ENCODE measurements at regions of chr5 and their contacts with region 1.

Region 1: GRCh38 chr5:54217826-54218503 is 92.4 kb downstream of the ARL15 start:
- DNase-seq: peak; percentile 75
- H3K4me3 ChIP-seq: no peak overlapping the region
- H3K27ac ChIP-seq: no peak overlapping the region
- H3K4me1 ChIP-seq: peaks cover 14% of the 10 kb centered on the region
- H3K27me3 ChIP-seq: peaks cover 6% of the 10 kb centered on the region
- CTCF ChIP-seq: peak; percentile 79

Region 2: GRCh38 chr5:53123702-53124101 is 1094.3 kb before region 1 on chr5:
- CTCF ChIA-PET with region 1: no interaction called
- POLR2A ChIA-PET with region 1: no interaction called
- intact Hi-C with region 1: loop called (anchors 2 kb)
- DNase-seq: peak; percentile 8
- H3K4me3 ChIP-seq: no peak overlapping the region
- H3K27ac ChIP-seq: no peak overlapping the region
- H3K4me1 ChIP-seq: no peaks in the 10 kb centered on the region
- H3K27me3 ChIP-seq: no peaks in the 10 kb centered on the region
- CTCF ChIP-seq: peak; percentile 40; the same call in 1 of the 2 replicates

Region 3: GRCh38 chr5:53425598-53426511 is 792.1 kb before region 1 on chr5:
- CTCF ChIA-PET with region 1: no interaction called
- POLR2A ChIA-PET with region 1: no interaction called
- intact Hi-C with region 1: loop called (anchors 1 kb)
- DNase-seq: peak; percentile 74
- H3K4me3 ChIP-seq: no peak overlapping the region
- H3K27ac ChIP-seq: no peak overlapping the region
- H3K4me1 ChIP-seq: no peaks in the 10 kb centered on the region
- H3K27me3 ChIP-seq: no peaks in the 10 kb centered on the region
- CTCF ChIP-seq: peak; percentile 72

Region 4: GRCh38 chr5:53478411-53479044 is 739.4 kb before region 1 on chr5:
- CTCF ChIA-PET with region 1: no interaction called
- POLR2A ChIA-PET with region 1: no interaction called
- intact Hi-C with region 1: loop called (anchors 5 kb)
- DNase-seq: peak; percentile 83
- H3K4me3 ChIP-seq: peak overlapping the region; percentile 45
- H3K27ac ChIP-seq: no peak overlapping the region
- H3K4me1 ChIP-seq: peaks cover 5% of the 10 kb centered on the region
- H3K27me3 ChIP-seq: peaks cover 55% of the 10 kb centered on the region
- CTCF ChIP-seq: peak; percentile 73

Region 5: GRCh38 chr5:53642049-53642448 is 575.9 kb before region 1 on chr5:
- CTCF ChIA-PET with region 1: no interaction called
- POLR2A ChIA-PET with region 1: no interaction called
- intact Hi-C with region 1: loop called (anchors 10 kb)
- DNase-seq: peak; percentile 92
- H3K4me3 ChIP-seq: no peak overlapping the region
- H3K27ac ChIP-seq: no peak overlapping the region
- H3K4me1 ChIP-seq: peaks cover 24% of the 10 kb centered on the region
- H3K27me3 ChIP-seq: no peaks in the 10 kb centered on the region
- CTCF ChIP-seq: no peak

Region 6: DNA sequence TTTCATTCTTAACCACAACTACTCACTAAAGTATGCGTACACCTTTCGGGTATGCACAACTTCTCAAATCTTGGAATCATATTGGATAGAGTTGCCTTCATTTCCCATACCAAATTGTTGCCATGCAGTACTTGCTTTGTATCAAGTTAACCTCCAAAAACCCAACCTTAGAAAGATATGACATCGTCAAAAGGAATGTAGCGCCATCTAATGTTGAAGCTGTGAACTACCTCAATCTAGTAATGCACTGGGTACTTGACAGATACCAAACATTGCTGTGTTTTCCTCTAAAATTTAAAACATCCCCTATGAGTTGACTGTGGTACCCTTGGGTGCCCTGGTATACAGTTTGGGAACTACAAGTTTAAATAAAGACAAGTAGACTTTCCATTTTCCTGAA is 226.0 kb before region 1 on chr5:
- CTCF ChIA-PET with region 1: interaction called, 13 read pairs
- POLR2A ChIA-PET with region 1: no interaction called
- intact Hi-C with region 1: loop called (anchors 10 kb)
- DNase-seq: peak; percentile 48
- H3K4me3 ChIP-seq: no peak overlapping the region
- H3K27ac ChIP-seq: no peak overlapping the region
- H3K4me1 ChIP-seq: peaks cover 16% of the 10 kb centered on the region
- H3K27me3 ChIP-seq: no peaks in the 10 kb centered on the region
- CTCF ChIP-seq: peak; percentile 61

Region 7: GRCh38 chr5:54171645-54172384 is 46.1 kb before region 1 on chr5:
- CTCF ChIA-PET with region 1: no interaction called
- POLR2A ChIA-PET with region 1: no interaction called
- intact Hi-C with region 1: no loop called
- DNase-seq: no peak
- H3K4me3 ChIP-seq: no peak overlapping the region
- H3K27ac ChIP-seq: no peak overlapping the region
- H3K4me1 ChIP-seq: no peaks in the 10 kb centered on the region
- H3K27me3 ChIP-seq: no peaks in the 10 kb centered on the region
- CTCF ChIP-seq: no peak